GM12878 (cell line): ENCODE measurements at regions of chr2 and their contacts with region 1.

Region 1: GRCh38 chr2:113889471-113890252 is at the start of gene ACTR3:
- DNase-seq: peak; percentile 99
- ATAC-seq: peak; percentile 76
- H3K4me3 ChIP-seq: peak within 1 kb of the TSS; percentile 90
- H3K27ac ChIP-seq: peak within 1 kb of the TSS; percentile 100
- H3K4me1 ChIP-seq: peaks cover 6% of the 10 kb centered on the region
- H3K27me3 ChIP-seq: no peaks in the 10 kb centered on the region
- CTCF ChIP-seq: peak in 1 of 3 experiments; percentile 32; a peak in 2 of 6 replicates
- EP300 ChIP-seq: peak; percentile 66 to 68; a peak in 2 of 4 replicates
- POLR2A ChIP-seq: peak; percentile 91
- RAD21 ChIP-seq: peak; percentile 30; the same call in 1 of the 2 replicates
- polyA plus RNA-seq, gene ACTR3: 79.1 to 99.1 TPM

Region 2: DNA sequence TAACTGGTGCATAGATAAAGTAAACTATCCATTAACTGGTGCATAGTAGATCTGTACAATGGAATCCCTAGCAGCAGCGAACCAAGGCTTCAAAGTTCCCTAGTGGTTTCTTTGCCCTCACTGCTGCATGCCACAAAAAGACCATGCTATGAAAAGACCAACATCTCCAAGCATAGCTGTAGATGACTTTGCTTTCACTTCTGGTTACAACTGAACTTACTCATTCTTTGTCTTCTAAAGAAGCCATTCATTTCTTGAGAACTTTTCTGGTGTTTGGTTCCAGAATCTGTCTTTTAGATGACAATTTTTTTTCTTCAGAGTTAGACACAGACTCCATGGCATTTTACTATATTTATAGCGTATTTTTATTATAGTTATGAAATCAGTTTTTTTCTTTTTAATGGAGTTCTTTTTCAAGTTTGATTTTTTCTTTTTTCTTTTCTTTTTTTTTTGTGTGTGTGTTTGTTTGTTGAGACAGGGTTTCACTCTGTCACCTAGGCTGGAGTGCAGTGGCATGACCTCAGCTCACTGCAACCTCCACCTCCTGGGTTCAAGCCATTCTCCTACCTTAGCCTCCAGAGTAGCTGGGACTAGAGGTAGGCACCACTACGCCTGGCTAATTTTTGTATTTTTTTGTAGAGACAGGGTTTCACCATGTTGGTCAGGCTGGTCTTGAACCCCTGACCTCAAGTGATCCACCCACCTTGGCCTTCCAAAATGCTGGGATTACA is 196.8 kb before region 1 on chr2:
- CTCF ChIA-PET with region 1: no interaction called
- POLR2A ChIA-PET with region 1: interaction called, 5 read pairs
- RAD21 ChIA-PET with region 1: interaction called, 3 read pairs
- SMC1A ChIA-PET with region 1: interaction called, 3 read pairs
- in situ Hi-C with region 1: no loop called
- intact Hi-C with region 1: loop called (anchors 5 kb)
- DNase-seq: peak; percentile 78
- ATAC-seq: peak; percentile 85
- H3K4me3 ChIP-seq: peak overlapping the region; percentile 31; the same call in 1 of the 2 replicates
- H3K27ac ChIP-seq: peak overlapping the region; percentile 89
- H3K4me1 ChIP-seq: peaks cover 39% of the 10 kb centered on the region
- H3K27me3 ChIP-seq: no peaks in the 10 kb centered on the region
- CTCF ChIP-seq: no peak
- EP300 ChIP-seq: peak in 1 of 2 experiments; percentile 59; a peak in 1 of 4 replicates
- POLR2A ChIP-seq: no peak
- RAD21 ChIP-seq: 0 out of 2 replicates have a peak, but pooled peaks have one; percentile 22

Region 3: DNA sequence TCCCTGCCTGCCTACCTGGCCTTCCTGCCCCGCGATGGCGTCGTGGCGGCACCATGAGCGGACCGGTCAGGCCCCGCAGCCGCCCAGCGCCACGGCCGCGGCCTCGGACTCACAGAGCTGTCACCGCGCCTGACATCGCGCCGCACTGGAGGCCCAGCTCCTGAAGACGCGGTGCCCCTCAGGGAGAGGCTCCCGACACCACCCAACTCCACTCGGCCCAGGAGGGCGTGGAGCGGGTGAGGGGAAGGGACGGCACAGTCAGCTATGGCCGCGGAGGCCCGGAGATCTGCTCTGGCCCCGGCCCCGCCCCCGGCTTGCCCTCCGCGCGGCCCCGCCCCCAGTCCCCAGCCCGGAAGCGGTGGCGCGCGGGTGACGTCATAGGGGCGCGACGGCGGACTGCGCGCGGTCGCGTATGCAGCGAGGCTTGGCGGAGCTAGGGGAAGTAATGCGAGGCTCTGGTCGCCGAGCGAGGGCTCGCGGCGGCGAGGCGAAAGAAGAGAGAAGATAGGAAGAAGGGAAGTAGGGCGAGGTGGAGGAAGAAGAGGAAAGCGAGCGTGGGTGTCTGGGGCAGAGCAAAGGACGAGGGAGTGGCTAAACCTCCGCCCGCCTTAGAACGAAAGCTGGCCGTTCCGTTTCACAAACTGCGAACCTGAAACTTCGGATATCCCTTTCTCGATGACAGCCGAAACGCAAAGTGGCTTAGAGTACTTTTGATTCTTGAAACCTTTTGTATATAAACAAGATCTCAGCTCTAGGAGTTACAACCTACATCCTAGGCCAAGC is 133.1 kb before region 1 on chr2 and contains the start of gene SLC35F5:
- CTCF ChIA-PET with region 1: interaction called, 4 read pairs
- POLR2A ChIA-PET with region 1: interaction called, 14 read pairs
- RAD21 ChIA-PET with region 1: interaction called, 12 read pairs
- SMC1A ChIA-PET with region 1: interaction called, 8 read pairs
- in situ Hi-C with region 1: loop called (anchors 5 kb)
- intact Hi-C with region 1: loop called (anchors 1 kb)
- DNase-seq: peak; percentile 70
- ATAC-seq: peak; percentile 94
- H3K4me3 ChIP-seq: peak within 1 kb of the TSS; percentile 97
- H3K27ac ChIP-seq: peak within 1 kb of the TSS; percentile 90
- H3K4me1 ChIP-seq: no peaks in the 10 kb centered on the region
- H3K27me3 ChIP-seq: no peaks in the 10 kb centered on the region
- CTCF ChIP-seq: no peak
- EP300 ChIP-seq: 0 out of 4 replicates have a peak, but pooled peaks of 1 of the 2 experiments have one; percentile 26
- POLR2A ChIP-seq: peak; percentile 98
- RAD21 ChIP-seq: peak; percentile 23; the same call in 1 of the 2 replicates
- polyA plus RNA-seq, gene SLC35F5: 1.8 to 5.0 TPM

Region 4: DNA sequence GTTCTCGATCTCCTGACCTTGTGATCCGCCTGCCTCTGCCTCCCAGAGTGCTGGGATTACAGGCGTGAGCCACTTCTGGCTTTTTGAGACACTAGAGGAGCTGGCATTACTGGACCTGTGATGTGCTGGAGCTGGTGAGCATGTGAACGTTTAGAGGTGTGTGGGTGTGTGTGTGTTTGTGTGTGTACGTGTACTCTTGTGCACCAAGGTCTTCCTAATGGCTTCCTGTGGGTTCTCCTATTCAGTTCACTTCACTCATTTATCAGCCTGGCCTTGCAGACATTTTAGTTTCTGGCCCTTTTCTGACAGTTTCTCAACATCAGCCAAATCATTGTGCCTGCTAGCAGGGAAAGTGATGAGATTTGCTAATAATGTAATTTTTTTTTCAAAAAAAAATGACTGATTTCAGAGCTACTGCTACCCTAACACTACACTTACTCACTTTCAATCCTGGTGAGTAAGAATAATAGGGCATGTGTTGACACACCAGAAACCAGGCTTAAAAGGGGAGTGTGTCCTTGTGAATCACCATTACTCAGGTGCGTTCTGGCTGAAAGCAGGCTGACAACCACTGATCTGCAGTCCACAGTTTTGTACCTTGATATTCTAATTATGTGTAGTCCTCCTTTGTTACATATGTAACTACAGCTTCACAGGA is 40.8 kb before region 1 on chr2:
- CTCF ChIA-PET with region 1: no interaction called
- POLR2A ChIA-PET with region 1: no interaction called
- RAD21 ChIA-PET with region 1: no interaction called
- SMC1A ChIA-PET with region 1: interaction called, 3 read pairs
- in situ Hi-C with region 1: no loop called
- intact Hi-C with region 1: loop called (anchors 5 kb)
- DNase-seq: no peak
- ATAC-seq: peak; percentile 71
- H3K4me3 ChIP-seq: no peak overlapping the region
- H3K27ac ChIP-seq: no peak overlapping the region
- H3K4me1 ChIP-seq: no peaks in the 10 kb centered on the region
- H3K27me3 ChIP-seq: no peaks in the 10 kb centered on the region
- CTCF ChIP-seq: no peak
- EP300 ChIP-seq: no peak
- POLR2A ChIP-seq: no peak
- RAD21 ChIP-seq: no peak

Region 5: DNA sequence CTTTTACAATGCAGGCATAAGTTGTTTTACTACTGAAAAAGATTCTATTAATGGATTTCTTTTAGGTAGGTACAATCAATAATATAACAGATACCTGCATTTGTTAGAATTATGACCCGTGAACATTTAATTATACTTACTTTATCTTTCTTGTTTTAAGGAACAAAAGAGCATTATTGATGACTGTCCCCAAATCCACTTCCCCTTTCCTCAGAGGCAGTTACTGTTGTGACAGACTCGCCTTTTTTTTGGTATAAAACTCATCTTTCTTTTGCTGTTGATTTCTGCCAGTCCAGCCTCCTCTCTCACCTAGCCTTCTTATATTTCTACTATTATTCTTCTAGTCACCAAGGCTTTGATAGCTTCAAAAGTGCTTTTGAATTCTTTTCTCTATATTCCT is 12.3 kb after region 1 on chr2:
- CTCF ChIA-PET with region 1: interaction called, 59 read pairs
- POLR2A ChIA-PET with region 1: interaction called, 80 read pairs
- RAD21 ChIA-PET with region 1: interaction called, 17 read pairs
- SMC1A ChIA-PET with region 1: interaction called, 189 read pairs
- in situ Hi-C with region 1: no loop called
- intact Hi-C with region 1: no loop called
- DNase-seq: no peak
- ATAC-seq: peak; percentile 43
- H3K4me3 ChIP-seq: no peak overlapping the region
- H3K27ac ChIP-seq: no peak overlapping the region
- H3K4me1 ChIP-seq: peaks cover 18% of the 10 kb centered on the region
- H3K27me3 ChIP-seq: no peaks in the 10 kb centered on the region
- CTCF ChIP-seq: no peak
- EP300 ChIP-seq: no peak
- POLR2A ChIP-seq: no peak
- RAD21 ChIP-seq: no peak

Region 6: GRCh38 chr2:113922784-113923183 is 33.1 kb after region 1 on chr2:
- CTCF ChIA-PET with region 1: no interaction called
- POLR2A ChIA-PET with region 1: interaction called, 3 read pairs
- RAD21 ChIA-PET with region 1: interaction called, 3 read pairs
- SMC1A ChIA-PET with region 1: interaction called, 189 read pairs
- in situ Hi-C with region 1: no loop called
- intact Hi-C with region 1: loop called (anchors 2 kb)
- DNase-seq: no peak
- ATAC-seq: peak; percentile 82
- H3K4me3 ChIP-seq: no peak overlapping the region
- H3K27ac ChIP-seq: peak overlapping the region; percentile 27; the same call in 1 of the 2 replicates
- H3K4me1 ChIP-seq: peaks cover 27% of the 10 kb centered on the region
- H3K27me3 ChIP-seq: no peaks in the 10 kb centered on the region
- CTCF ChIP-seq: no peak
- EP300 ChIP-seq: peak in 1 of 2 experiments; percentile 24; a peak in 1 of 4 replicates
- POLR2A ChIP-seq: no peak
- RAD21 ChIP-seq: no peak